ENCODE measurements at regions of chr10 and their contacts with region 1.

Region 1: DNA sequence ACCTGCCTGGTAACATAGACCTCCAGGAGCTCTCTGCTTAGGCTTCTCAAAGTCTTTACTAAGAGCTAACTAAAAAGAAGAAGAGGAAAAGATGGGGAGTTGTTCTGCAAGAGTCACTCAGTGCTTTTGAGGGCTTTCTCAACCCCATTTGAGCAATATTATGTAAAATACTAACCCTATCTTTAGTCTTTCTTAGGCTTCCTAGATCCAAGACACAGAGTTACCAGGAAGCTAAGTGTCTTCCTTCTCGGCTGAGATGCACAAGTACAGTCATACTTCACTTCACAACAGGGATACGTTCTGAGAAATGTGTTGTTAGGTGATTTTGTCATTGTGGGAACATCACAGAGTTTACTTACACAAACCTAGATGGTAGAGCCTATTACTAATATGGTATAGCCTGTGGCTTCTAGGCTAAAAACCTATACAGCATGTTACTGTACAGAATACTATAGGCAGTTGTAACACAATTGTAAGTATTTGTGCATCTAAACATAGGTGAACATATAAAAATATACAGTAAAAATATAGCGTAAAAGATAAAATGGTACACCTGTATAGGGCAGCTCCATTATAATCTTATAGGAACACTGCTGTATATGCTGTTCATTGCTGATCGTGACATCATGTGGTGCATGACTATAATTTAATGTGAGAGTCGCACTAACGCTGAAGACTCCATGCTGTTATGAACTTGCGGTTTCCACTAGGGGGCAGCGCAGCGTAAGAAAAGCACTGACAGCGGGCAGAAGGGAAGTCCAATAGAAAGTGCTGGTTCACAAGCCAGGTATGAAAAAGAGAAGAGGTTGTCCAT is 16.3 kb downstream of the ANKRD22 start:
- DNase-seq: peak; percentile 80
- H3K4me3 Mint-ChIP-seq: no peak overlapping the region
- H3K27ac Mint-ChIP-seq: no peak overlapping the region
- H3K4me1 Mint-ChIP-seq: no peaks in the 10 kb centered on the region
- H3K27me3 Mint-ChIP-seq: no peaks in the 10 kb centered on the region
- CTCF ChIP-seq: peak; percentile 70

Region 2: GRCh38 chr10:88865281-88865876 is 30.1 kb after region 1 on chr10:
- CTCF ChIA-PET with region 1: interaction called, 6 read pairs
- intact Hi-C with region 1: loop called (anchors 1 kb)
- DNase-seq: no peak
- H3K4me3 Mint-ChIP-seq: no peak overlapping the region
- H3K27ac Mint-ChIP-seq: no peak overlapping the region
- H3K4me1 Mint-ChIP-seq: no peaks in the 10 kb centered on the region
- H3K27me3 Mint-ChIP-seq: no peaks in the 10 kb centered on the region
- CTCF ChIP-seq: no peak

Region 3: GRCh38 chr10:88880282-88881076 is 45.2 kb after region 1 on chr10:
- CTCF ChIA-PET with region 1: no interaction called
- intact Hi-C with region 1: loop called (anchors 5 kb)
- DNase-seq: peak; percentile 74
- H3K4me3 Mint-ChIP-seq: peak overlapping the region; percentile 92
- H3K27ac Mint-ChIP-seq: peak overlapping the region; percentile 73
- H3K4me1 Mint-ChIP-seq: peaks cover 15% of the 10 kb centered on the region
- H3K27me3 Mint-ChIP-seq: no peaks in the 10 kb centered on the region
- CTCF ChIP-seq: no peak

Region 4: GRCh38 chr10:88990384-88991160 is 155.3 kb after region 1 on chr10 and contains the start of gene FAS:
- CTCF ChIA-PET with region 1: no interaction called
- intact Hi-C with region 1: no loop called
- DNase-seq: peak; percentile 53
- H3K4me3 Mint-ChIP-seq: peak within 1 kb of the TSS; percentile 92
- H3K27ac Mint-ChIP-seq: peak within 1 kb of the TSS; percentile 54
- H3K4me1 Mint-ChIP-seq: peaks cover 17% of the 10 kb centered on the region
- H3K27me3 Mint-ChIP-seq: no peaks in the 10 kb centered on the region
- CTCF ChIP-seq: no peak
- total RNA-seq, gene FAS: 3.1 and 5.5 TPM in 2 replicates

Region 5: GRCh38 chr10:89134963-89135362 is 299.7 kb after region 1 on chr10:
- CTCF ChIA-PET with region 1: no interaction called
- intact Hi-C with region 1: no loop called
- DNase-seq: no peak
- H3K4me3 Mint-ChIP-seq: no peak overlapping the region
- H3K27ac Mint-ChIP-seq: no peak overlapping the region
- H3K4me1 Mint-ChIP-seq: no peaks in the 10 kb centered on the region
- H3K27me3 Mint-ChIP-seq: no peaks in the 10 kb centered on the region
- CTCF ChIP-seq: no peak

Region 6: GRCh38 chr10:89217057-89217990 is 382.0 kb after region 1 on chr10:
- CTCF ChIA-PET with region 1: no interaction called
- intact Hi-C with region 1: loop called (anchors 10 kb)
- DNase-seq: peak; percentile 47
- H3K4me3 Mint-ChIP-seq: no peak overlapping the region
- H3K27ac Mint-ChIP-seq: no peak overlapping the region
- H3K4me1 Mint-ChIP-seq: no peaks in the 10 kb centered on the region
- H3K27me3 Mint-ChIP-seq: no peaks in the 10 kb centered on the region
- CTCF ChIP-seq: peak; percentile 33